Posterior vena cava (tissue), 2 donors: ENCODE measurements at regions of chr3 and their contacts with region 1.

Region 1: DNA sequence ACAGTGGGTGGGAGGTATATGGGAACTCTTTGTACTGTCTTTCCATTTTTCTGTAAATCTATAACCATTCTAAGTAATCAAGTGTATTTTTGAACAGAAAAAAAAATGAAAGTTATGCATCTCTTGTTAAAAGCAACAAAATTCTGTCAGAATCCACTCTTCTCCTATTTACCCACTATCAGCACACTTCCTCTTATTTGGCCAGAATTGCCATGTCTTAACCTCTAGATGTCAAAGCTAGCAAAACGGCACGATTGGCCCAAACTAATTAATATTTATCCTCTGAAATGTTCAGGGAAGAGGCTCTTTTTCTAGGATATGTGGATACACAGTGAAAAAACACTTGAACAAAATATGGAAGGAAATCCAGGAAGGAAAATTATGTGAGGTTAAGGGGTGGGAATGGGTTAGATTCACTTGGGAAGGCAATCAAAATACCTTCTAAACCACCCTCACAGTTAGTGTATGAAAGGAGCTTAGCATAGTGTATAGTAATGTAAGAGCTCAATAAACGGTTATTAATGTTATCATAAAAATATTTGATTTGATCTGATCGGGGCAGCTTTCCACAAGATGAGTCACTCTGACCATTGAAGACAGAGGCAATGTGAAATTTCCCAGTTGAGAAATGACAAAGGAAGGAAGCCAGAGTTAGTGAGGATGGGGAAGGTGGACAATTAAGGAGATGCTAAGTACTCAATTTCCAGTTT is 20.1 kb upstream of the TGFBR2 start:
- DNase-seq: no peak

Region 2: GRCh38 chr3:32240159-32240545 is 1653.9 kb after region 1 on chr3:
- intact Hi-C with region 1: loop called in 1 of 2 experiments (anchors 10 kb)
- DNase-seq: no peak